Activated CD4-positive, alpha-beta T cell treated with anti-CD3 and anti-CD28 coated beads for 36 hours (primary cell): ENCODE measurements at regions of chr5 and their contacts with region 1.

Region 1: GRCh38 chr5:55172051-55172899 is 702 bp downstream of the CDC20B start:
- DNase-seq: peak; percentile 73
- ATAC-seq: peak; percentile 71
- H3K4me3 Mint-ChIP-seq: peak overlapping the region; percentile 75
- H3K27ac Mint-ChIP-seq: no peak overlapping the region
- H3K4me1 Mint-ChIP-seq: peaks cover 37% of the 10 kb centered on the region
- H3K27me3 Mint-ChIP-seq: peaks cover 58% of the 10 kb centered on the region

Region 2: DNA sequence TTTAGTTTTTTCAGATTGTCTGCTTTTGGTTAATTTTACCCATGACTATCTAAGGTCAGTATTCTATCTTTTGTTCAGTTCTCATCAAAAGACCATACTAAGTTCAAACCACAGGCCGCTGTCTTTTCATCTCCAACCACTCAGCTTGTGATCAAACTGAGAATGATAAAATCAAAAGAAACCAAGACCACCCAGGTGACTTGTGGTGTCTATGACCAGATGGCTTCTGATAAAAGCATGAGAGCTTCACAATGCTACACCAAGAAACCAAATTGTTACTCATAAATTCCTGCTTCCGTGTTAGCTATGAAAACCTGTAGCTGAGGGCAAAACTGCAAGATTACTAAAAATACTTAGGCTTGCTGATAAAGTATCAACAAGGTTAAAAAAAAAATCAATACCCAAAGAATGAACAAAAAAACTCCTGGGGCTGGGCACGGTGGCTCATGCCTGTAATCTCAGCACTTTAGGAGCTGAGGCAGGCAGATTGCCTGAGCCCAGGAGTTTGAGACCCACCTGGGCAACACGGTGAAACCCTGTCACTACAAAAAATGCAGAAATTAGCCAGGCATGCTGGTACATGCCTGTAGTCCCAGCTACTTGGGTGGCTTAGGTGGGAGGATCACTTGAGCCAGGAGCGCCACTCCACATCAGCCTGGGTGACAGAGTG is 38.1 kb before region 1 on chr5:
- CTCF ChIA-PET with region 1: no interaction called
- POLR2A ChIA-PET with region 1: no interaction called
- intact Hi-C with region 1: no loop called
- DNase-seq: peak; percentile 15
- ATAC-seq: peak; percentile 60
- H3K4me3 Mint-ChIP-seq: no peak overlapping the region
- H3K27ac Mint-ChIP-seq: no peak overlapping the region
- H3K4me1 Mint-ChIP-seq: peaks cover 14% of the 10 kb centered on the region
- H3K27me3 Mint-ChIP-seq: peaks cover 4% of the 10 kb centered on the region

Region 3: DNA sequence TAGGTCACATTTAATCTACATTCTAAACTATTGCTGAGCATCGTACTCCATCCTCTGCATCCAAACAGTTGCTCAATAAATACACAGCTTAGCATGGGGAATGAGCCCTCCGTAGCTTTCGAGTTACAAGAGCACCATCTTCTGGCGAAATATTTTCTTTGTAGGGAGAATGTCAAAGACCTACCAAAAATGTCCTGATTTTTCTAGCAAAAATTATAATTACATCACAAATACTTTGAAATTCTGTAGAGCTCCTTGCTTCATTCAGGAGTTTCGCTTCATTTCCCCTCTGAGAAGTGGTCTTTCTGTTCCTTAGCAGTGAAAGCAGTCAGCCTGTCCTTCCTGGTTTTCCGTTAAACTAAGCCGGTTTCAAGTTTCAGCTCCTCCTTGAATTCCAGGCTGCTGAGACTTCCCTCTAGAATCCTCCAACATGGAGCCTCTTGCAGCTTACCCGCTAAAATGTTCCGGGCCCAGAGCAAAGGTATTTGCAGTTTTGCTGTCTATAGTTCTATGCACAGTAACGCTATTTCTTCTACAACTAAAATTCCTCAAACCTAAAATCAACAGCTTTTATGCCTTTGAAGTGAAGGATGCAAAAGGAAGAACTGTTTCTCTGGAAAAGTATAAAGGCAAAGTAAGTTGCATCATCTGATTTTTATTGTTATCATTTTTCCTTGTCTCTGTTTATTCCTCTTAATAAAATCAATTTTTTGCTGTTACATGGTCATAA is 12.3 kb before region 1 on chr5 and contains the start of gene GPX8:
- CTCF ChIA-PET with region 1: interaction called, 14 read pairs
- POLR2A ChIA-PET with region 1: interaction called, 3 read pairs
- intact Hi-C with region 1: no loop called
- DNase-seq: peak; percentile 27
- ATAC-seq: peak; percentile 57
- H3K4me3 Mint-ChIP-seq: no peak within 1 kb of the TSS
- H3K27ac Mint-ChIP-seq: no peak within 1 kb of the TSS
- H3K4me1 Mint-ChIP-seq: no peaks in the 10 kb centered on the region
- H3K27me3 Mint-ChIP-seq: peaks cover 37% of the 10 kb centered on the region
- total RNA-seq, gene GPX8: not detected

Region 4: DNA sequence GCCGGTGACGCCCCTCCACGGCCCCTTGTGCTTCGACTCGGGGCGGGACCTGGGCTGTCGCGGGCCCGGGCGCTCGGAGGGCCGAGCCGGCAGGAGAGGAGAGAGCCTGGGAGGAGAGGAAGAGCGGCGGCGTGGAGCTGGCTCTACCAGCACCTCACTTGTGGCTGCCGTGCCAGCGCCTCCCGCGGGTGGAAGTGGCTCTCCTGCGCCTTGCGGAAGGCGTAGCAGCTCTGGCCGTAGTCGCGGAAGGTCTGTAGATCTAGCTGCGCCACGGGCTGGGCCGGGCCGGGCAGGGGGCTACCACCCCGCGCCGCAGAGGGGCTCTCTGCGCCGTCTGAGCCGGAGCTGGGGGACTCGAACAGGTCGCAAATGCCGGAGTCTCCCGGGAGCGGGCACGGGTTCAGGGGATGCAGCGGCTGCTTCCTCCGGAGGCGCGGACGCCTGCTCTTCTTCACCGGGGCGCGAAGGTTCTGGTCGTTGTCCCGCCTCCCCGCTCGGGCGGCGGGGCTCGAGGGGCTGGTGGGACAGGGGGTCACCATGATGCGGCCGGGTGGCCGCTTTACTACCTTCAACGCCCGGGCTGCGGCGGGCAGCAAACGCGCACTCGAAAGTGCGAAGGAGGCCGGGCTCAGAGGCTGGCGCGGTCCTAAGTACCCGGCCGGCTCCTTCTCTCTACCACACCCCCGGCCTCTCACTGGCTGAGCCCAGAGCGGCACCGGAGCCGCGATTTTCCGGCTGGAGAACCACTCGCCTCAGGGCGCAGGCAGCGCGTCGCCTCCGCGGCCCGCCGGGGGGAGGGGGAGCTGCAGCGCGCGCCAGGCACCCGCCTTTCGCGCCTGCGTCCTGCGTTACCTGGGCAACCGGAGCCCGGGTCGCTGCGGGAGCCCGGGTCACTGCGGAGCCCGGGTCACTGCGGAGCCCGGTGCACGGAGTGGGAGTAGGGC is 61.0 kb after region 1 on chr5 and contains the start of gene CCNO:
- CTCF ChIA-PET with region 1: interaction called, 6 read pairs
- POLR2A ChIA-PET with region 1: interaction called, 8 read pairs
- intact Hi-C with region 1: loop called in 1 of 2 experiments (anchors 1 kb)
- DNase-seq: peak; percentile 75
- ATAC-seq: peak; percentile 79
- H3K4me3 Mint-ChIP-seq: peak within 1 kb of the TSS; percentile 73
- H3K27ac Mint-ChIP-seq: no peak within 1 kb of the TSS
- H3K4me1 Mint-ChIP-seq: peaks cover 30% of the 10 kb centered on the region
- H3K27me3 Mint-ChIP-seq: peaks cover 63% of the 10 kb centered on the region
- total RNA-seq, gene CCNO: not detected

Region 5: GRCh38 chr5:55421074-55421529 is 248.8 kb after region 1 on chr5:
- CTCF ChIA-PET with region 1: no interaction called
- POLR2A ChIA-PET with region 1: no interaction called
- intact Hi-C with region 1: loop called in 1 of 2 experiments (anchors 5 kb)
- DNase-seq: peak; percentile 45
- ATAC-seq: peak; percentile 99
- H3K4me3 Mint-ChIP-seq: no peak overlapping the region
- H3K27ac Mint-ChIP-seq: no peak overlapping the region
- H3K4me1 Mint-ChIP-seq: peaks cover 33% of the 10 kb centered on the region
- H3K27me3 Mint-ChIP-seq: no peaks in the 10 kb centered on the region

Region 6: GRCh38 chr5:55564721-55565120 is 392.4 kb after region 1 on chr5:
- CTCF ChIA-PET with region 1: no interaction called
- POLR2A ChIA-PET with region 1: no interaction called
- intact Hi-C with region 1: no loop called
- DNase-seq: no peak
- ATAC-seq: no peak
- H3K4me3 Mint-ChIP-seq: no peak overlapping the region
- H3K27ac Mint-ChIP-seq: no peak overlapping the region
- H3K4me1 Mint-ChIP-seq: no peaks in the 10 kb centered on the region
- H3K27me3 Mint-ChIP-seq: no peaks in the 10 kb centered on the region

Region 7: DNA sequence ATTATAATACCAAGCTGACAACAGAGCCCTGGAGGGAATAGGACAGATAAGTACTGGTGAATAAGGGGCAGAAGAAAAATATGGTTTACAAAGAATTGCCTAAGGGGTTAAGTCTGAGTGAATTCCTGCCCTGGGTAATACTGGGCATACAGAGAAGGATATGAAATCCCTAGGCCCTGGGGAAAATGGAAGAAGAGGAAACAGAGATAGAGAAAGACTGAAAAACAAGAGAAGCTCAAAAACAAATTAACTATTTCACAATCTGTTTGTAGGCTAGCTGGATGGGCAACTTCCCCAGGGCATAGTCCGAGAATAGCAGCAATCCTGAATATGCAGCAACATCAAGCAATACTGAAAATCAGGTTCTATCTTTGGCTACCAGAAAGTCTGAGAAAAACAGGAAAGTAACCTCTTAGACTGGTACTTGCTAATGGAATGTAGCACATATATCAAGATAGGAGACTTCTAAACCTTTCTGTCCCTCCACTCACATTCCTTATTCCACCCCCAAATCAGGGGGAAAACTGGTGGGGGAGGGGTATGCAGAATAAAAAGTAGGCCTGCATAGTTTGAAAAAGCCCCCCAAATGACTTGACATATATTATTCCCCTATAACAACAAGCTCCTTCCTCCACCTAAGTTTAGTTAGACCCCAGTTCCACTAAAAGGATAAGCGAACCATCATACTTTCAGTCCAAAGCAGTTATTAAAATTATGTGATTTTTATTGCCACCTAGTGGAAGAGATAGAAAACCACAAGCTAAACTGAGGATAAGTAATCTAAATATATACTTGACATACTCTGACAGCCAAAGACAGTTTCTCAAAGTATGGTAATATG is 519.2 kb after region 1 on chr5:
- CTCF ChIA-PET with region 1: interaction called, 12 read pairs
- POLR2A ChIA-PET with region 1: no interaction called
- intact Hi-C with region 1: loop called (anchors 1 to 2 kb)
- DNase-seq: no peak
- ATAC-seq: peak; percentile 36
- H3K4me3 Mint-ChIP-seq: no peak overlapping the region
- H3K27ac Mint-ChIP-seq: no peak overlapping the region
- H3K4me1 Mint-ChIP-seq: no peaks in the 10 kb centered on the region
- H3K27me3 Mint-ChIP-seq: no peaks in the 10 kb centered on the region

Region 8: GRCh38 chr5:55923177-55923771 is 751.0 kb after region 1 on chr5:
- CTCF ChIA-PET with region 1: no interaction called
- POLR2A ChIA-PET with region 1: no interaction called
- intact Hi-C with region 1: loop called in 1 of 2 experiments (anchors 5 kb)
- DNase-seq: peak; percentile 41
- ATAC-seq: peak; percentile 64
- H3K4me3 Mint-ChIP-seq: peak overlapping the region; percentile 70
- H3K27ac Mint-ChIP-seq: peak overlapping the region; percentile 89
- H3K4me1 Mint-ChIP-seq: peaks cover 15% of the 10 kb centered on the region
- H3K27me3 Mint-ChIP-seq: no peaks in the 10 kb centered on the region